AG04449 (cell line): ENCODE measurements at regions of chr6 and their contacts with region 1.

Region 1: GRCh38 chr6:100664274-100665040 is 199.7 kb upstream of the SIM1 start:
- DNase-seq: no peak
- H3K4me3 ChIP-seq: no peak overlapping the region
- CTCF ChIP-seq: peak; percentile 37

Region 2: GRCh38 chr6:100479179-100480035 is 185.1 kb before region 1 on chr6:
- CTCF ChIA-PET with region 1: interaction called, 25 read pairs
- POLR2A ChIA-PET with region 1: no interaction called
- DNase-seq: no peak
- H3K4me3 ChIP-seq: no peak overlapping the region
- CTCF ChIP-seq: peak; percentile 36

Region 3: DNA sequence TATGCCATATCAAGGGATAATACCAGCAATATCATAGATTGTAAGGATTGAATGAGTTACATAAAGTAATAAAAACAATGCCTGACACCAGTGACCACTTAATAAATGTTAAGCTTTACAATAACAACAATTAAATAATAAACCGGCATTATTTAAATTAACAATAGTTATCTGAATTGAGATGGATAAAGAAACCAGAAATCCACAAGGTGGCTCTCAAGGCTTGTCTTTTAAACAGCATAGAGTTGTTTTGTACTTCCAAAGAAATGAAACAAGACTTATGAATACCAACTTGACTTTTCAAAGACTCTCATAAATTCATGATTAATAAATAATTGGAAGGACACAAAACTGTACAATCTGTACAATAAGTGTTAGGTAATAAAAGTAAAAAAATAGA is 13.6 kb after region 1 on chr6:
- CTCF ChIA-PET with region 1: interaction called, 19 read pairs
- POLR2A ChIA-PET with region 1: no interaction called
- DNase-seq: no peak
- H3K4me3 ChIP-seq: no peak overlapping the region
- CTCF ChIP-seq: no peak

Region 4: DNA sequence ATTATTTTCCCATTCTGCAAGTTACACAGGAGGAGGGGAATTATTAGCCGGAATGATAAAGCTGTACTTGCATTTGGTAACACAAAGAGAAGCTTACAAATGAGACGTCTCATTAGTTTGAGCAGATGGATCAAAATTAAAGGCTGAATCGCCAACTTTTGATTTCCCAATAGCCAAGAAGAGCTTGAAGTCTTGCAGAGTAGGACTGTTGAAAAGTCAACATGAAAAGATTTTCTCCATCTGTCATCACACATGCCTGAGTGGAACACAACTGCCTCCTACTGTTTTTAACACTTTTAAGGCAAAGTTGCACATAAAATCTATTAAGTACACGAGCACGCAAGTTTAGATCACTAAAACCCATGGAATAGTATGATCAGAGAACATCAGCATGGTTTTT is 40.5 kb after region 1 on chr6:
- CTCF ChIA-PET with region 1: no interaction called
- POLR2A ChIA-PET with region 1: no interaction called
- DNase-seq: no peak
- H3K4me3 ChIP-seq: no peak overlapping the region
- CTCF ChIP-seq: no peak